ENCODE measurements at regions of chr14 and their contacts with region 1.

Region 1: DNA sequence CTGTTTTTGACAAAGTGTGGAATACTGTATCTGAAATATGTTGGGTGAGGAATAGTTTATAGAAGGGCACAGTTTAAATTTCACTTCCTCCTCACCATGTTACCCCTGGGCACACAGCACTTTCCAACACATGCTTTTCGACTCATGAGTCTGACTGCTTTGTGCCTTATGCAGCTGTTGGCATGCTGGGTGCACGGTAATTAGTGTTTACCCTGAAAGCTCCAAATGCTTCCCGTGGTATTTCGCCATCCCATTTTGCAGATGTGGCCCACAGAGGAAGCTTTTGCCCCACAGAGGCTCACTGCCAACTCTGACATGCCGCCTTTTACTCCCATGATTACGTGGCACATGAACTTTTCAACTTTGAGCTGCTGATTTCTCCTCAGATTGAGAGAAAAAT is 168.6 kb downstream of the PRKCH start:
- DNase-seq: peak in 1 of 6 donors; percentile 67
- ATAC-seq: peak in 2 of 4 donors; percentile 9 to 49
- H3K4me3 ChIP-seq: no peak overlapping the region
- H3K27ac ChIP-seq: peak overlapping the region in 2 of 4 donors; percentile 49 to 70
- H3K4me1 ChIP-seq: peaks cover 10 to 43% (median 24%) of the 10 kb centered on the region in 3 donors
- H3K27me3 ChIP-seq: no peaks in the 10 kb centered on the region
- CTCF ChIP-seq: no peak

Region 2: GRCh38 chr14:61321385-61322010 is 168.4 kb before region 1 on chr14 and contains the start of gene PRKCH:
- intact Hi-C with region 1: no loop called
- DNase-seq: peak; percentile 81 to 93 (median 84)
- ATAC-seq: peak; percentile 83 to 87 (median 84)
- H3K4me3 ChIP-seq: peak within 1 kb of the TSS; percentile 33 to 91 (median 65)
- H3K27ac ChIP-seq: peak within 1 kb of the TSS; percentile 38 to 70 (median 60)
- H3K4me1 ChIP-seq: no peaks in the 10 kb centered on the region
- H3K27me3 ChIP-seq: no peaks in the 10 kb centered on the region
- CTCF ChIP-seq: no peak
- total RNA-seq, gene PRKCH: 5.2 to 16.9 (median 9.5) TPM

Region 3: DNA sequence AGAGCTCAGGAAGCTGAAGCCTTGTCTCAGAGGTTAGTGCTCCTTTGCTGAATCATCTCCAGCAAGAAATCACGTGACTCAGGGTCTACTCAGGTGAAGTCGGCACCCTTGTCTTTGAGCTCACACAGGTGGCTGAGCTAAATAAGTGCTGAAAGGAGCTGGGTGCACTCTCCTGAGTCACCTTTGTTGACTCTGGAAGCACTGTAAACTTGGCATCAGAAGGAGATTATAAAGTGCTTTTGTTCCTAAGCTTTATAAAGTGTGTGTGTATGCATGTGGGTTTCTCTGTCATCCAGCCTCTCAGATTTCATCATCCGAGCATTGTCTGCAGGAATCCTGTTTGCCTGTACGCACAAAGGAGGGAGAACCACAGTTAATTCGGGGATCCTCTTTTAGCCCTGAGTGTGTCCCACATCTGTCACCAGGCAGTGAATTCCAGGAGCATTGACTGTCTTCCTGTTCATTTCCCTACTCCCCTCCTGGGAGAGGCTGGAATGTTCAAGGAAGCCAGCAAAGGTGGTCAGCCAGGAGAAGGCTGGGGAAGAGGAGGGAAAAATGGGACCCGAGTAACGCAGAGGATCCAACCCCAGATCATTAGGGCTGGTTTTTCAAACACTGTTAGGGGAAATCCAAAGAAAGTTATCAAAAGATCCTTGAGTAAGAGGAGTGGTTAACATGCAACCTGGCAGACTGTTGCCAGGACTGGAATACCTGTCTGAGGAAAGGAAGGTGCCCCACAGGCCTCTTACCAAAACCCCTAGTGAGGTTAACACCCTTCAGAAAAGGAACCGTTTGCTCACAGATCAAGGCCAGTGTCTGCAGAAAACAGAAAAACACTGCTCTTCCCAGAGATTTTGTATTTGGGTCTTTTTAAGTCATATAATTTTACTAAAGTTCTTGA is 47.9 kb after region 1 on chr14:
- intact Hi-C with region 1: loop called in 1 of 3 experiments (anchors 10 kb)
- DNase-seq: peak in 4 of 6 donors; percentile 63 to 87 (median 80)
- ATAC-seq: peak; percentile 90 to 96 (median 94)
- H3K4me3 ChIP-seq: no peak overlapping the region
- H3K27ac ChIP-seq: peak overlapping the region; percentile 40 to 80 (median 56)
- H3K4me1 ChIP-seq: peaks cover 51 to 63% (median 51%) of the 10 kb centered on the region in 3 donors
- H3K27me3 ChIP-seq: no peaks in the 10 kb centered on the region
- CTCF ChIP-seq: no peak